Posterior cingulate gyrus (tissue), 11 donors: ENCODE measurements at regions of chr12 and their contacts with region 1.

Region 1: DNA sequence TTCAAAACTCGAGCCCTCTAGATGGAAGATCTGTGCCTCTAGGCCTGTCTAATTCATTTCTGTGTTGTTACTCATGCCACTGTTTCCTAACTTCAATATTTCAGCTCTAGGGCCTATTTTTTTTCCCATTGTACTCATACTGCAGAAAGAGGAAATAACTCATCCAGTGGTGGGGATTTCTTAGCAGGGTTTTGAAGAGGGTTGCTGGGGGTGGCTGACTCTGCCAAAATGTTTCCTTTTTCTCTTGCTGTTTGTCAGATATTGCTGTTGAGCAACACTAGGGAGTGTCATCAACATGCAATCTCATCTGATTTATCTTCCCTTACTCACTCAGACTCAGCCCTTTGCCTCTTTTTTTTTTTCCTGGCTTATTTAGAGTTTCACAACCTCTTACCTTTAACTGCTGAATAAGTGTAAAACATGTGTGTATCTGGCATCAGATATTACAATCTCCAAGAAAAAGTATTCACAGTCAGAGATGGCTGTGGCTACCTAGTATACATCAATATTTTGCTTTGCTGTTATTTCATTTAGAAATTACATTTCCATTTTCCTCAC is 189.5 kb downstream of the DUSP6 start:
- DNase-seq: peak in 1 of 10 donors; percentile 25

Region 2: DNA sequence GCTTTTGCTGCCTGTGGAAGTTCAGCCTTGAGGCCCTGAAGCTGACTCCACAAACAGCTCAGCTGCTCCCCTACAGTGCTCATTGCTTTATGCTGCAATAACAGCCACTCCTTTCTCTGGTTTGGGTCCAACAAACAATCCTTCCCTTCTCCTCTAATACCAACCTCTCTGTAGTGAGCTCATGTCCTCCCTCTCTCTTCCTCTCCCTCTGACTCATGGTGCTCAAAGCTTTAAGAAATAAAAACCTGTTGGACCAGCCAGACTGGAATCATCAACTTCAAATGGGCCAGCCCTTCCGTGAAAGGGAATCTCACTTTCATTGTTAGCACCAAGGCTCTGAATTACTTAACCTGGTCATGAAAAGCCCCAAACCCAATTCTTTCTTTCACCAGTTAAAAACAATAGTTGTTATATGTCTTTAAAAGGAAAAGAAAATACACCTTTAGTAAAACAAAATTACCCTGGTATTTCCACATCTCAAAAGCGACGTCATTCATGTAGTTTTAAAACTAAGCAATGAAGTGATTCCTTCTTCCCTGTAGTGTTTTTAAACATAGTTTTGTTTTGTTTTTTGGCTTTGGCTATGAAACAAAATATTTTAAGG is 63.1 kb after region 1 on chr12:
- intact Hi-C with region 1: loop called (anchors 10 kb)
- DNase-seq: no peak